ENCODE measurements at regions of chr5 and their contacts with region 1.

Region 1: DNA sequence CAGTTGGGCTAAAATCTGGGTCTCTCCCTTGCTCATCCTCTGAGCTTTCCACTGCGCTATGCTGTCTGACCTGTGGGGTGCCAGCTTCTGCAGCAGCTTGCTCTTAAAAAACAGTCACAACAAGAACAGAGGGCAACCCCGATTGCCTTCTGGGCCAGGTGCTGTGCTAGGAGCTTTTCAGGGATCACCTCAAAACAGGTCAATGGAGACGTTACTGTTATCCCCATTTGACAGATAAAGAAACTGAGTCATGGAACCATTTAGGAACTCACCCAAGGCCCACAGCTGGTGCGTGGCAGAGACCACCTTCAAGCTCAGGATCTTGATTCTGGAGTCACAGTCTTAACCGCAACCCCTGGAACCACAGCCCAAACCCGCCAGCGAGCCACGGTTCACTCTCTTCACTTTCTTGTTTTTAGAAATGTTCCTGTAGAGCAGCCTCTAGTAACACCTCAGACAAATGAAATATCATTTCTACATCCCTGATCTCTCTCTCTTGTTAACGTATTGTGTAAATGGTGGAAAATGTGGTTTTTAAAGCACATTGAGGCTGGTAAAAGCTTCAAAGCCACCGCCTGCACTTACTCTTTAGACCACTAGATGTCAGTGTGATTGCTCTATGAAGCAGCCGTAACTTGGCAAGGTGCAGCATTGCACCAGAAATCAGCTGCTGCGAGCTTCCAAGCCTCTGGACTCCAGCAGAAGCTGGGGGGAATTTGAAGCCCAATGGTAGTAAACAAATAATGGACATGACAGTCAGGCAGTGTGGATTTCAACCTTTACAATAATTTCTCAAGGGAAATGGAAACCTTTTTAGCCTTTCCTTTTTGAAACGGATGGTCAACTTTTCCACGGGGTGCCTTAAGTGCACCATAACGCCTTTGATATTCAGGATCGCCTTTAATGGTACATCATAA is 1.7 kb downstream of the FYB1 start:
- DNase-seq: peak; percentile 75
- ATAC-seq: peak; percentile 85
- H3K4me3 ChIP-seq: peak overlapping the region in 1 of 5 experiments; percentile 65
- H3K4me3 Mint-ChIP-seq: no peak overlapping the region
- H3K27ac ChIP-seq: no peak overlapping the region
- H3K27ac Mint-ChIP-seq: no peak overlapping the region
- H3K4me1 ChIP-seq: no peaks in the 10 kb centered on the region
- H3K4me1 Mint-ChIP-seq: no peaks in the 10 kb centered on the region
- H3K27me3 ChIP-seq: no peaks in the 10 kb centered on the region
- H3K27me3 Mint-ChIP-seq: peaks cover 10% of the 10 kb centered on the region
- CTCF ChIP-seq: peak; percentile 96

Region 2: GRCh38 chr5:39148983-39149534 is 68.6 kb before region 1 on chr5:
- CTCF ChIA-PET with region 1: interaction called, 11 read pairs
- POLR2A ChIA-PET with region 1: no interaction called
- intact Hi-C with region 1: loop called (anchors 1 kb)
- DNase-seq: peak; percentile 17
- ATAC-seq: no peak
- H3K4me3 ChIP-seq: no peak overlapping the region
- H3K4me3 Mint-ChIP-seq: no peak overlapping the region
- H3K27ac ChIP-seq: no peak overlapping the region
- H3K27ac Mint-ChIP-seq: no peak overlapping the region
- H3K4me1 ChIP-seq: peaks cover 15 to 16% of the 10 kb centered on the region in 2 donors
- H3K4me1 Mint-ChIP-seq: peaks cover 28% of the 10 kb centered on the region
- H3K27me3 ChIP-seq: no peaks in the 10 kb centered on the region
- H3K27me3 Mint-ChIP-seq: no peaks in the 10 kb centered on the region
- CTCF ChIP-seq: peak; percentile 51

Region 3: GRCh38 chr5:39235648-39236047 is 18.0 kb after region 1 on chr5:
- CTCF ChIA-PET with region 1: interaction called, 11 read pairs
- POLR2A ChIA-PET with region 1: no interaction called
- intact Hi-C with region 1: no loop called
- DNase-seq: no peak
- ATAC-seq: no peak
- H3K4me3 ChIP-seq: no peak overlapping the region
- H3K4me3 Mint-ChIP-seq: no peak overlapping the region
- H3K27ac ChIP-seq: no peak overlapping the region
- H3K27ac Mint-ChIP-seq: no peak overlapping the region
- H3K4me1 ChIP-seq: no peaks in the 10 kb centered on the region
- H3K4me1 Mint-ChIP-seq: no peaks in the 10 kb centered on the region
- H3K27me3 ChIP-seq: no peaks in the 10 kb centered on the region
- H3K27me3 Mint-ChIP-seq: peaks cover 11% of the 10 kb centered on the region
- CTCF ChIP-seq: no peak

Region 4: GRCh38 chr5:39274398-39275085 is 56.9 kb after region 1 on chr5:
- CTCF ChIA-PET with region 1: interaction called, 173 read pairs
- POLR2A ChIA-PET with region 1: no interaction called
- intact Hi-C with region 1: no loop called
- DNase-seq: peak; percentile 64
- ATAC-seq: peak; percentile 78
- H3K4me3 ChIP-seq: peak overlapping the region; percentile 12 to 63 (median 41)
- H3K4me3 Mint-ChIP-seq: peak overlapping the region; percentile 87
- H3K27ac ChIP-seq: peak overlapping the region; percentile 81 to 83
- H3K27ac Mint-ChIP-seq: peak overlapping the region; percentile 93
- H3K4me1 ChIP-seq: peaks cover 29 to 30% of the 10 kb centered on the region in 2 donors
- H3K4me1 Mint-ChIP-seq: peaks cover 32% of the 10 kb centered on the region
- H3K27me3 ChIP-seq: no peaks in the 10 kb centered on the region
- H3K27me3 Mint-ChIP-seq: no peaks in the 10 kb centered on the region
- CTCF ChIP-seq: no peak

Region 5: DNA sequence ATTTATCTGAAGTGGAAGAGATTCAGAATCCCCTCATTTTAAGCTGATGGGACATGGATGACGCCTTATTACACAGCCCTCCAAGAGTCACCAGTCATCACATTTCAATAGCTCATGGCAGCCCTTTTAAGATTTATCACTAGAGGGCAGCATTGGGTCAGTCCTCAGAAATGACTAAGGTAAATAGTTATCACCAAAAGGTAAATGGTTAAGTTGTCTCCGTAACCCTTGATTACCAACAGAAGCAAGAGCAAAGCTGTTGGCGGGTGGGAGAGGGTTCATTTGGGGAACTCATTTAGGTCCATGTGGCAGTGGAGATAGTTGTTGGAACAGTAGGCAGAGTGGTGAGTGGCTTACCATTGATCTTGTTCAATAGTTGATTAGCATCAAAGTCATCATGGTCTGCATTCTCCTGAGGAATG is 158.7 kb after region 1 on chr5:
- CTCF ChIA-PET with region 1: interaction called, 12 read pairs
- POLR2A ChIA-PET with region 1: no interaction called
- intact Hi-C with region 1: no loop called
- DNase-seq: peak; percentile 58
- ATAC-seq: peak; percentile 31
- H3K4me3 ChIP-seq: no peak overlapping the region
- H3K4me3 Mint-ChIP-seq: no peak overlapping the region
- H3K27ac ChIP-seq: no peak overlapping the region
- H3K27ac Mint-ChIP-seq: no peak overlapping the region
- H3K4me1 ChIP-seq: no peaks in the 10 kb centered on the region
- H3K4me1 Mint-ChIP-seq: no peaks in the 10 kb centered on the region
- H3K27me3 ChIP-seq: no peaks in the 10 kb centered on the region
- H3K27me3 Mint-ChIP-seq: peaks cover 3% of the 10 kb centered on the region
- CTCF ChIP-seq: peak; percentile 78

Region 6: DNA sequence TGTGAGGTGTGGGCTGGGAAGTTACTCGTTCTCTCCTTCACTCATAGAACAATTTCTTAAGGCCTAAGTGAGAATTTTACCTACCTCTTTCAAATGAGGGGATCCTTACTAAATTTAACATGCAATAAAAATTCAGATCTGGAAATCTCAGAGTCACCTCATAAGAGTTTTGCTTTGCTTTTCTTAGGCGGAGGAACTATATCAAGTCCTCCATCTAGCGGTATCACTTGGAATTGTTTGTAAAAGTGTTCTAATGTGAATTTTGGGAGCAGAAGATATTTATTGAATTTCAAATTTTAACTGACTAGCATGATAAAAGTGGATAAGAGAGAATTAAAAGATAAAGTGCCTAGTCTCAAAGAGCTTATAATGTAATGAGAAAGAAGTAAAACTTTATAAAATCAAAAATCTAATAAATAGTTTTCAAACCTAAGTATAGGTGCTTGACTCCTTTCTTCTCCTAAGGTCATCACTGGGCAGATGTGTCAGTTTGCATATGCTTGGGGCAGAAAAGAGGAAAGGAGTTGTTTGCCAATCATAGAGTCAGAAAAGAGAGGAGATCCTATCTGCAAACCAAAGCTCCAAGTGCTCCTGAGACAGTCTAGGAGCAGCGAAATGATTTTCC is 352.9 kb after region 1 on chr5:
- CTCF ChIA-PET with region 1: interaction called, 9 read pairs
- POLR2A ChIA-PET with region 1: no interaction called
- intact Hi-C with region 1: loop called (anchors 1 kb)
- DNase-seq: peak; percentile 31
- ATAC-seq: no peak
- H3K4me3 ChIP-seq: no peak overlapping the region
- H3K4me3 Mint-ChIP-seq: no peak overlapping the region
- H3K27ac ChIP-seq: no peak overlapping the region
- H3K27ac Mint-ChIP-seq: no peak overlapping the region
- H3K4me1 ChIP-seq: no peaks in the 10 kb centered on the region
- H3K4me1 Mint-ChIP-seq: no peaks in the 10 kb centered on the region
- H3K27me3 ChIP-seq: peaks cover 0 to 5% (median 2%) of the 10 kb centered on the region in 4 experiments
- H3K27me3 Mint-ChIP-seq: peaks cover 7% of the 10 kb centered on the region
- CTCF ChIP-seq: peak; percentile 74

Measured in B cell (primary cell).